ENCODE measurements at regions of chr11 and their contacts with region 1.

Region 1: DNA sequence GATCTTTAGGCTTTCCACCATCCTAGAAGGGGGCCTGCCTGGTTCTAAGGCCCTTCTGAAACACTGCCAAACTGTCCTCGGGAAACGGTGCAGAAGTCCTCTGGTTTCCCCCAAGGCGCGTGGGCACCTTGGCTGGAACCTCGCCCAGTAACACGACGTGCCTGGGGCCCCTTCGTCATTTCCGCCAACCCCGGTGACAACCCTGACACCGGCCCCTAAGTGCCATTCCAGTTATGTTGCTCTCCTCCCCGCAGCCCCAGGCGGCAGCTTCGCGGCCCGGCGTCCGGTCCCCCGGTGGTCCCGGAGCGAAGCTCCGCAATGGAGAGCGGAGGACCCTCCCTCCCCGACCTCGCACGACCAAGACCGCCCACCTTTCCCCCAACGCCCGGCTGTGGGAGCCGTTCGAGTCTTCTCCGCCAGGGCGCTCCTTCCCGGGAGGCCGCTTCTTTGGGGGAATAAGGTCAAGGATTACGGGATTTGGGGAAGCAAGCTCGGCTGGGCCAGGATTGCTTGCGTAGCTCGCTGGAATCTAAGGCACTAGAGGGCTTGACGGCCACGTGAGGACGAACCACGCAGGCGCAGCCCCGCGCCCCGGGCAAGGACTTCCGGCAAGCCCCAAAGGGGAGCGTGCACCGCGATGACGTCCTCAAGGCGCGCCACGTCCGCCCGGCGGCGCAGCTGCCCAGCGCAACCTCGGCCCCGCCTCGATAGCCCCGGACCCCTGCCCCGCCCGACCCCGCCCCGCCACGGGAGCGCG is 626 bp downstream of the RNH1 start:
- H3K4me3 Mint-ChIP-seq: peak overlapping the region; percentile 89
- H3K27ac Mint-ChIP-seq: peak overlapping the region; percentile 100
- H3K4me1 Mint-ChIP-seq: peaks cover 48% of the 10 kb centered on the region
- H3K27me3 Mint-ChIP-seq: no peaks in the 10 kb centered on the region

Region 2: DNA sequence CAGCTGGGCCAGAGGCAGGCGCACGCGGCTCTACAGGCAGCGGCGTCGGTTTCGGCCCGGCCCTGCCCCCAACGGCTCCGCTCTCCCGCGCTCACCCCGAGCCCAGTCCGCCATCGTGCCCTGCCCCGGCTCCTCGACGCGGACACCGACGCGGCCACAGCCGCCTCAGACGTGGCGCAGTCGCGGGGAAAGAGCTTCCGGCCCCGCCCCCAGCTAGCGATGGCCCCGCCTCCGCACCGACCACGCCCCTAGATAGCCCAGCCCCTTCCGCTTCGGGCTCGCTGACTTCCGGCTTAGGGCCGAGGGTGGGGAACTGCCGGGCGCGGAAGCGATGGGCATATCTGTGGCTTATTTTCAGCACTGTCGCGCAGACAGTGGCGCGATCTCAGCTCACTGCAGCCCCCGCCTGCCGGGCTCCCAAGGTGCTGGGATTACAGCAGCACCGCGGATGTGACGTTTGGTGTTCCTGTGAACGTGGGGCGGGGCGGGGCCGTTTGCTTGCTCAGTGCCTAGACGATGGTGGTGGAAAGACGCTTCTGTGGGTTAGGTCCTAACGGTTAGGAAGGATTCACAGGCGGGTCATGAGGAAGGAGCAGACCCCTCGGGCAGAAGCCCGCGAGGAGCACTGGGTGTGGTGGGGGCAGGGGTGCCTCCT is 299.1 kb before region 1 on chr11 and contains the starts of genes BET1L and RIC8A:
- intact Hi-C with region 1: loop called (anchors 10 kb)
- H3K4me3 Mint-ChIP-seq: peak within 1 kb of the TSS; percentile 87
- H3K27ac Mint-ChIP-seq: peak within 1 kb of the TSS; percentile 99
- H3K4me1 Mint-ChIP-seq: peaks cover 72% of the 10 kb centered on the region
- H3K27me3 Mint-ChIP-seq: no peaks in the 10 kb centered on the region

Region 3: DNA sequence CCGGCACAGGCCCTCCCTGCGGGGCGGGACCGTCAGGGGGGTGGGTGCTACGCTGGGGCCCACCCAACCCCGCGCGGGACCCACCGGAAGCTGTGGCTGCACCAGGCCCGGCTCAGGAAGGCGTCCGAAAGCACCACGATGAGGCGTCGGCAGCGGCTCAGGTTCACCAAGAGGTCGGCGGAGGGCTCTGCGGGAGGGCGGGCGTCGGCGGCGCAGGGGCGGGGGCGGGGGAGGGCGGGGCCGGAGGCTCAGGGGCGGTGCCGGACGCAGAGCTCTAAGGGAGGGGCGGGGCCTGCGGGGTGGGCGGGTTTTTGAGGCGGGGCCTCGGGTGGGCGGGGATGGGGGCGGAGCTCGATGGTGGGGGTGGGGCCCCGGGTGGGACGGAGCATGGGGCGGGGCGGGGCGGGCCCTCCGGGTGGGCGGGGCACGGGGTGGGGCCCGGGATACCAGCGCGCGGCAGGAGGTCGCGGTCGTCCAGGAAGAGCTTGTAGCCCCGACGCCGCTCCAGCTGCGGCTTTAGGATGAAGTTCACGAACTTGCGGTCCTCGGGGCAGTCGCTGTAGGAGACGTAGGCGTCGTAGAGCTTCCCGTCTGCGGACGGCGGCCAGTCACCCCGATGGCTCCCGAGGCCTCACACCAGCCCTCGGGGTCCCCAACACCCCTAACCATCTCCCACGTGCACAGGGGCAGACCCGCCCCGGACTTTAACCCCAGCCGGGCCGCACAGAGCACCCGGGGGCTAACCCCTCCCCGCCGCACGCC is 99.3 kb before region 1 on chr11:
- intact Hi-C with region 1: loop called (anchors 2 kb)
- H3K4me3 Mint-ChIP-seq: peak overlapping the region; percentile 71
- H3K27ac Mint-ChIP-seq: peak overlapping the region; percentile 70
- H3K4me1 Mint-ChIP-seq: peaks cover 9% of the 10 kb centered on the region
- H3K27me3 Mint-ChIP-seq: peaks cover 2% of the 10 kb centered on the region

Region 4: GRCh38 chr11:429931-430456 is 76.4 kb before region 1 on chr11:
- intact Hi-C with region 1: no loop called
- H3K4me3 Mint-ChIP-seq: no peak overlapping the region
- H3K27ac Mint-ChIP-seq: no peak overlapping the region
- H3K4me1 Mint-ChIP-seq: no peaks in the 10 kb centered on the region
- H3K27me3 Mint-ChIP-seq: peaks cover 19% of the 10 kb centered on the region

Region 5: DNA sequence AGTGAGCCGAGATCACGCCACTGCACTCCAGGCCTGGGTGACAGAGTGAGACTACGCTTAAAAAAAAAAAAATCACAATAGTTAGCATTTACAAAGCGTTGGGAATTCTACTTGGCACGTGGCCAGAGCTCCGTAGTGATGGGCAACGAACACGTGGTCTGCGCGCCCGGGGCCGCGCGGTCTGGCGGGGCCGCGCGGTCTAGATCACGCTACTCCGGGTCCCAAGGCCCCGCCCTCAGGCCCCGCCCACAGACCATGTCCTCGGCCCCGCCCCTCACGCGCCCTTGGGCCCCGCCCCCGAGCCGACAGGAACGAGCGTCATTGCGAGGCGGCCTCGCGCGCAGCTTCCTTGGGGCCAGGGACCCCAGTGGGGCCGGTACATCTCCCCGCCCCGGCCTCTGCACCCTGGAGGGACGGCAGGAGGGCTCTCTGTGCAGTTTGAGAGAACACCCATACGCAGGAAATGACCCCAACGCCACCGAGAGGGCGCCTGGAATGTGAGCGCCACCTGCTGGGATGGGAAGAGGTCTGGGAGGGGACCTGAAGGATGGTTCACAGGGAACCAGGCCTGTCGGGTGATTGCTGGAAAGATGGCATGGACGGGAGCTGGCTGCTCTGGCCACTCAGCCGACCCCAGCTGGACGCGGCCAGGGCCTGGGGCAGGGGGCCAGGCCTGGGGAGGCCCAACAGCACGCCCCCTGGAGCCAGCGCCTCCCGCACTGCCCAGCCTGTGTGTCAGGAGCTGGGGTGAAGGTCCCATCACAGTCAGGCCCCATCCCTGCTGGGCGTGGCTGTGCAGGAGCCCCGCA is 58.3 kb before region 1 on chr11:
- intact Hi-C with region 1: loop called (anchors 1 kb)
- H3K4me3 Mint-ChIP-seq: peak overlapping the region; percentile 94
- H3K27ac Mint-ChIP-seq: peak overlapping the region; percentile 96
- H3K4me1 Mint-ChIP-seq: peaks cover 31% of the 10 kb centered on the region
- H3K27me3 Mint-ChIP-seq: peaks cover 25% of the 10 kb centered on the region

Region 6: GRCh38 chr11:469684-470560 is 36.5 kb before region 1 on chr11:
- intact Hi-C with region 1: no loop called
- H3K4me3 Mint-ChIP-seq: no peak overlapping the region
- H3K27ac Mint-ChIP-seq: peak overlapping the region; percentile 73
- H3K4me1 Mint-ChIP-seq: peaks cover 27% of the 10 kb centered on the region
- H3K27me3 Mint-ChIP-seq: no peaks in the 10 kb centered on the region

Region 7: GRCh38 chr11:518463-519250 is 12.2 kb after region 1 on chr11:
- intact Hi-C with region 1: loop called (anchors 2 kb)
- H3K4me3 Mint-ChIP-seq: peak overlapping the region; percentile 64
- H3K27ac Mint-ChIP-seq: peak overlapping the region; percentile 69
- H3K4me1 Mint-ChIP-seq: peaks cover 37% of the 10 kb centered on the region
- H3K27me3 Mint-ChIP-seq: no peaks in the 10 kb centered on the region

Region 8: GRCh38 chr11:535519-536454 is 29.4 kb after region 1 on chr11 and contains the start of gene HRAS:
- intact Hi-C with region 1: loop called (anchors 2 kb)
- H3K4me3 Mint-ChIP-seq: peak within 1 kb of the TSS; percentile 83
- H3K27ac Mint-ChIP-seq: peak within 1 kb of the TSS; percentile 89
- H3K4me1 Mint-ChIP-seq: peaks cover 28% of the 10 kb centered on the region
- H3K27me3 Mint-ChIP-seq: peaks cover 35% of the 10 kb centered on the region